CD8-positive, alpha-beta T cell (primary cell): ENCODE measurements at regions of chr10 and their contacts with region 1.

Region 1: GRCh38 chr10:43671656-43672531 is 23.2 kb upstream of the ZNF32 start:
- DNase-seq: peak in 8 of 9 experiments; percentile 25 to 75 (median 49)
- ATAC-seq: peak; percentile 61
- H3K4me3 ChIP-seq: no peak overlapping the region
- H3K4me3 Mint-ChIP-seq: no peak overlapping the region
- H3K27ac ChIP-seq: no peak overlapping the region
- H3K27ac Mint-ChIP-seq: no peak overlapping the region
- H3K4me1 ChIP-seq: peaks cover 5% of the 10 kb centered on the region
- H3K4me1 Mint-ChIP-seq: peaks cover 5% of the 10 kb centered on the region
- H3K27me3 ChIP-seq: peaks cover 7 to 8% of the 10 kb centered on the region in 2 experiments
- H3K27me3 Mint-ChIP-seq: peaks cover 37% of the 10 kb centered on the region
- CTCF ChIP-seq: peak; percentile 91

Region 2: GRCh38 chr10:43491855-43492254 is 180.0 kb before region 1 on chr10:
- CTCF ChIA-PET with region 1: no interaction called
- POLR2A ChIA-PET with region 1: no interaction called
- intact Hi-C with region 1: no loop called
- DNase-seq: peak in 3 of 9 experiments; percentile 5 to 18 (median 11)
- ATAC-seq: no peak
- H3K4me3 ChIP-seq: no peak overlapping the region
- H3K4me3 Mint-ChIP-seq: no peak overlapping the region
- H3K27ac ChIP-seq: no peak overlapping the region
- H3K27ac Mint-ChIP-seq: no peak overlapping the region
- H3K4me1 ChIP-seq: no peaks in the 10 kb centered on the region
- H3K4me1 Mint-ChIP-seq: no peaks in the 10 kb centered on the region
- H3K27me3 ChIP-seq: no peaks in the 10 kb centered on the region
- H3K27me3 Mint-ChIP-seq: peaks cover 2% of the 10 kb centered on the region
- CTCF ChIP-seq: no peak

Region 3: DNA sequence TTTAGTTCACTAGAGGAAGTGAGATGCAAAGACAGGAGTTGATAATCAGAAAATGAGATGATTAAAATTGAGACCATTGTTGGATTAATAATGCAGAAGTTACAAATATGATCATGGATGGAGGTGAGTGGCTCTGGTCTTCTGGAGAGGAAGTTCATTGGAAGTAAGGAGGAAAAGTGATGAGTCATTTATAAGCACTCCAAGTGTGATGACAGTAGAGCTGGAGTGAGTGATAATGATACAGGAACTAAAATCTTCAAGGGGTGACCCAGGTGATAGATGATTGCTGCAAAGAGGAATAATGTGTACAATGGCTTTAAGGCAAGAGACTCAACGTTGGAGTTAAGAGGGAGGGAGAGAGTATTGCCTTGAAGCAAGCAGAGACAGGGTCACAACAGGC is 44.0 kb before region 1 on chr10:
- CTCF ChIA-PET with region 1: no interaction called
- POLR2A ChIA-PET with region 1: no interaction called
- intact Hi-C with region 1: loop called in 1 of 2 experiments (anchors 1 kb)
- DNase-seq: no peak
- ATAC-seq: no peak
- H3K4me3 ChIP-seq: no peak overlapping the region
- H3K4me3 Mint-ChIP-seq: no peak overlapping the region
- H3K27ac ChIP-seq: no peak overlapping the region
- H3K27ac Mint-ChIP-seq: no peak overlapping the region
- H3K4me1 ChIP-seq: peaks cover 6% of the 10 kb centered on the region
- H3K4me1 Mint-ChIP-seq: peaks cover 6% of the 10 kb centered on the region
- H3K27me3 ChIP-seq: no peaks in the 10 kb centered on the region
- H3K27me3 Mint-ChIP-seq: no peaks in the 10 kb centered on the region
- CTCF ChIP-seq: no peak

Region 4: GRCh38 chr10:43689955-43690771 is 18.3 kb after region 1 on chr10:
- CTCF ChIA-PET with region 1: interaction called, 33 read pairs
- POLR2A ChIA-PET with region 1: no interaction called
- intact Hi-C with region 1: no loop called
- DNase-seq: peak; percentile 73 to 93 (median 82)
- ATAC-seq: peak; percentile 99
- H3K4me3 ChIP-seq: peak overlapping the region; percentile 61 to 83
- H3K4me3 Mint-ChIP-seq: peak overlapping the region; percentile 88
- H3K27ac ChIP-seq: peak overlapping the region in 1 of 2 experiments; percentile 49
- H3K27ac Mint-ChIP-seq: peak overlapping the region; percentile 52
- H3K4me1 ChIP-seq: peaks cover 8% of the 10 kb centered on the region
- H3K4me1 Mint-ChIP-seq: peaks cover 5% of the 10 kb centered on the region
- H3K27me3 ChIP-seq: no peaks in the 10 kb centered on the region
- H3K27me3 Mint-ChIP-seq: peaks cover 29% of the 10 kb centered on the region
- CTCF ChIP-seq: peak; percentile 86

Region 5: GRCh38 chr10:43843321-43844101 is 171.6 kb after region 1 on chr10:
- CTCF ChIA-PET with region 1: no interaction called
- POLR2A ChIA-PET with region 1: no interaction called
- intact Hi-C with region 1: no loop called
- DNase-seq: no peak
- ATAC-seq: no peak
- H3K4me3 ChIP-seq: no peak overlapping the region
- H3K4me3 Mint-ChIP-seq: no peak overlapping the region
- H3K27ac ChIP-seq: no peak overlapping the region
- H3K27ac Mint-ChIP-seq: no peak overlapping the region
- H3K4me1 ChIP-seq: peaks cover 12% of the 10 kb centered on the region
- H3K4me1 Mint-ChIP-seq: peaks cover 24% of the 10 kb centered on the region
- H3K27me3 ChIP-seq: peaks cover 0 to 2% of the 10 kb centered on the region in 2 experiments
- H3K27me3 Mint-ChIP-seq: no peaks in the 10 kb centered on the region
- CTCF ChIP-seq: no peak

Region 6: GRCh38 chr10:44310762-44311562 is 639.1 kb after region 1 on chr10:
- CTCF ChIA-PET with region 1: interaction called, 3 read pairs
- POLR2A ChIA-PET with region 1: no interaction called
- intact Hi-C with region 1: loop called in 1 of 2 experiments (anchors 1 kb)
- DNase-seq: peak; percentile 33 to 87 (median 61)
- ATAC-seq: peak; percentile 76
- H3K4me3 ChIP-seq: peak overlapping the region; percentile 25 to 28
- H3K4me3 Mint-ChIP-seq: peak overlapping the region; percentile 55
- H3K27ac ChIP-seq: peak overlapping the region; percentile 51 to 70
- H3K27ac Mint-ChIP-seq: peak overlapping the region; percentile 64
- H3K4me1 ChIP-seq: peaks cover 7% of the 10 kb centered on the region
- H3K4me1 Mint-ChIP-seq: peaks cover 10% of the 10 kb centered on the region
- H3K27me3 ChIP-seq: no peaks in the 10 kb centered on the region
- H3K27me3 Mint-ChIP-seq: peaks cover 14% of the 10 kb centered on the region
- CTCF ChIP-seq: peak; percentile 32

Region 7: GRCh38 chr10:44857363-44858016 is 1185.6 kb after region 1 on chr10:
- CTCF ChIA-PET with region 1: interaction called, 22 read pairs
- POLR2A ChIA-PET with region 1: no interaction called
- intact Hi-C with region 1: loop called (anchors 1 to 2 kb)
- DNase-seq: peak in 8 of 9 experiments; percentile 33 to 69 (median 58)
- ATAC-seq: peak; percentile 84
- H3K4me3 ChIP-seq: no peak overlapping the region
- H3K4me3 Mint-ChIP-seq: no peak overlapping the region
- H3K27ac ChIP-seq: no peak overlapping the region
- H3K27ac Mint-ChIP-seq: no peak overlapping the region
- H3K4me1 ChIP-seq: no peaks in the 10 kb centered on the region
- H3K4me1 Mint-ChIP-seq: no peaks in the 10 kb centered on the region
- H3K27me3 ChIP-seq: no peaks in the 10 kb centered on the region
- H3K27me3 Mint-ChIP-seq: peaks cover 4% of the 10 kb centered on the region
- CTCF ChIP-seq: peak; percentile 93

Region 8: DNA sequence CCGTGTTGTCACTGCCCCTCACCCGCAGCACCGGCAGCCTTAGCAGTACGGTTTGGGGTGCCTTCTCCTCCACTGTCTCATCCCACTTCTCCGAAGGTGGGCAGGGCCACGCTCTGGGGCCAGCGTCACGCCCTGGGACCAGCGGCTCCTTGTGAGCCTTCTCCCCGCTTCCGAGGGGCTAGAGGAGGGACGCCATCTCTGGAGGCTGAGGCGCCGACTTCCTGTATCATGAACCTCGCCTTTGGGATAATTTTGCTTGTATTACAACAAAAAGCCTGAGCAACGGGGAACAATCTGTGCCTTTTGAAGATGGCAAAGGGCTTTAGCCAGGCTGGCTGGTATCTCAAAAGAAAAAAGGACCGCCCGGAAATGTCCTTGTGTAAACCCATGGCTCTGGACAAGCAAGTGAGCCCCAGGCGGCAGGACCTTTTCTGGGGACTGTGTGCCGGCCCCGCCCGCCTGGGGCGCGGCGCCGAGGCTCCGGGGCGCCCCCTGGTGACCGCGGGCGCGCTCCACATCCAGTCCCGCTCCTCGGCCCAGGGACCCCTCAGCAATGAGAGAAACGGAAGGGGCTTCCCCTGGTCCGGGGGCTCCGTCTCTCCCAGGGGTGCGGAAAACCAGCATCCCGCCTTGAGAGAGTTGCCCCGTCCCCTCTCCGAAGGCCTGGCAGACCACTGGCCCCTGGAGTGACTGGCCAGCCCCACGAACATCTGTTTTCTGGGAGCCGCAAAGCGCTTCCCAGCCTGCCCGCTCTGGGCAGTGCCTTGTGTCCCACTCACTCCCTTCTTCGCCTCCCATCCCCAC is 1302.9 kb after region 1 on chr10:
- CTCF ChIA-PET with region 1: no interaction called
- POLR2A ChIA-PET with region 1: no interaction called
- intact Hi-C with region 1: loop called (anchors 5 to 10 kb)
- DNase-seq: peak; percentile 36 to 83 (median 56)
- ATAC-seq: peak; percentile 98
- H3K4me3 ChIP-seq: peak overlapping the region; percentile 44 to 48
- H3K4me3 Mint-ChIP-seq: peak overlapping the region; percentile 70
- H3K27ac ChIP-seq: peak overlapping the region in 1 of 2 experiments; percentile 44
- H3K27ac Mint-ChIP-seq: peak overlapping the region; percentile 27
- H3K4me1 ChIP-seq: peaks cover 20% of the 10 kb centered on the region
- H3K4me1 Mint-ChIP-seq: peaks cover 8% of the 10 kb centered on the region
- H3K27me3 ChIP-seq: no peaks in the 10 kb centered on the region
- H3K27me3 Mint-ChIP-seq: no peaks in the 10 kb centered on the region
- CTCF ChIP-seq: peak; percentile 90